Vagina (tissue), 2 donors: ENCODE measurements at regions of chr15 and their contacts with region 1.

Region 1: GRCh38 chr15:38440353-38441129 is 13.4 kb upstream of the FAM98B start:
- DNase-seq: no peak
- H3K4me3 ChIP-seq: no peak overlapping the region
- H3K27ac ChIP-seq: no peak overlapping the region
- H3K4me1 ChIP-seq: no peaks in the 10 kb centered on the region
- H3K27me3 ChIP-seq: no peaks in the 10 kb centered on the region
- CTCF ChIP-seq: peak; percentile 66 to 80 (median 70)
- POLR2A ChIP-seq: no peak

Region 2: GRCh38 chr15:38699633-38700230 is 259.2 kb after region 1 on chr15:
- intact Hi-C with region 1: loop called (anchors 10 kb)
- DNase-seq: no peak
- H3K4me3 ChIP-seq: no peak overlapping the region
- H3K27ac ChIP-seq: no peak overlapping the region
- H3K4me1 ChIP-seq: no peaks in the 10 kb centered on the region
- H3K27me3 ChIP-seq: no peaks in the 10 kb centered on the region
- CTCF ChIP-seq: peak; percentile 28 to 65 (median 52)
- POLR2A ChIP-seq: no peak